ENCODE measurements at regions of chr1 and their contacts with region 1.

Region 1: GRCh38 chr1:48202030-48202752 is 20.3 kb upstream of the SLC5A9 start:
- DNase-seq: peak; percentile 57 to 81 (median 70)
- ATAC-seq: peak; percentile 95
- H3K4me3 ChIP-seq: no peak overlapping the region
- H3K27ac ChIP-seq: no peak overlapping the region
- H3K4me1 ChIP-seq: peaks cover 0 to 6% of the 10 kb centered on the region in 2 donors
- H3K27me3 ChIP-seq: no peaks in the 10 kb centered on the region
- CTCF ChIP-seq: peak; percentile 61 to 76

Region 2: DNA sequence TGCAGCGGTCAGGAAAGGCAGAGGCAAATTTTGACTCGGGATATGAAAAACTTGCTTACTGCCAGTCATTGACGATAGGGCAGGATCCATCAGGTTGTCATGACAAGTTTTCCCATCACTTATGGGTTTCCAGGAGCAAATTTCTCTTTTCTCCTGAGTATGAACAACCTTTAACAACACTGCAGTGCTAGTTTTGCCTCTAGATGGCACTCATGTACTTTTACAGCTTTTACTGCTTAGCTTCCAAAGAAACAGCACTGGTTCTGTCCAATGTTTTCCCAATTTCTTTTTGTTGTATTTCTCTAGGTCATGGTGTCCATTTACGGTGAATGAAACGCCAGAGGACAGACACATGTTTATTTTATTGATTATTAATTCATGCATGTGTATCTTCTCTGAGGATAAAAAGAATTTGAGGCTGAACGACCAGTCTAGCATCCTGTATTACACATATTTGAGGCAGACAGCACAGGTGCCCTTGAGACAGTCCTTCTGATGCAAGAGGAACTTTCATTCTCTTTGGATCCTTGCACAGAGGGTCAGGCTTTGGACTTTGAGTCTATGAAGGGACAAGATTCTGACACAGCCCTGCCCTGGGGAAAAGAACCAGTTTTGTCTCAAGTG is 92.7 kb before region 1 on chr1:
- intact Hi-C with region 1: loop called in 1 of 2 experiments (anchors 10 kb)
- DNase-seq: peak in 2 of 4 donors; percentile 52 to 64
- ATAC-seq: peak; percentile 84
- H3K4me3 ChIP-seq: no peak overlapping the region
- H3K27ac ChIP-seq: no peak overlapping the region
- H3K4me1 ChIP-seq: no peaks in the 10 kb centered on the region
- H3K27me3 ChIP-seq: no peaks in the 10 kb centered on the region
- CTCF ChIP-seq: peak; percentile 64 to 78

Measured in left lung (tissue), 14 donors.